ENCODE measurements at regions of chr11 and their contacts with region 1.

Region 1: GRCh38 chr11:110251837-110252236 is 44.6 kb downstream of the RDX start:
- DNase-seq: peak; percentile 97
- H3K4me3 Mint-ChIP-seq: peak overlapping the region; percentile 38
- H3K27ac Mint-ChIP-seq: peak overlapping the region; percentile 74
- H3K4me1 Mint-ChIP-seq: peaks cover 15% of the 10 kb centered on the region
- H3K27me3 Mint-ChIP-seq: no peaks in the 10 kb centered on the region
- CTCF ChIP-seq: no peak

Region 2: DNA sequence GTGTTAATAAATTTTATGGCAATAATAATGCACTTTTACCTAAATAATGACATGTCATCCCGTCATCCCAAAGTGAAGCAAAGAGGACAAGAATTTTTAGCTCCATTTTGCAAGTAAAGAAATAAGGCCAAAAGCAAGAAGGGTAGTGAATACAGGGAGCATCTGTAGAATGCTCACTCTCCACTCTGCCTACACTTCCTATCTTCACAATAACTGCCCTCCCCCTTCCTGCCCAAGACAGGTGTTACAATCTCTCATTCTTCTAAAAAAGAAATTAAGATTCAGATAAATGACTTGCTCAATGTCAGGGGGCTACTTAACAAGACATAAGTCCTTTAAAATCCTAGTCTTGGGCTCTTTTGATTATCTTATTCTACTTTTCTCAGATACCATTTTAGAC is 35.7 kb after region 1 on chr11:
- CTCF ChIA-PET with region 1: interaction called, 11 read pairs
- POLR2A ChIA-PET with region 1: interaction called, 4 read pairs
- intact Hi-C with region 1: no loop called
- DNase-seq: no peak
- H3K4me3 Mint-ChIP-seq: no peak overlapping the region
- H3K27ac Mint-ChIP-seq: no peak overlapping the region
- H3K4me1 Mint-ChIP-seq: peaks cover 26% of the 10 kb centered on the region
- H3K27me3 Mint-ChIP-seq: no peaks in the 10 kb centered on the region
- CTCF ChIP-seq: no peak

Region 3: GRCh38 chr11:110296226-110297075 is 44.6 kb after region 1 on chr11 and contains the start of gene RDX:
- CTCF ChIA-PET with region 1: interaction called, 3 read pairs
- POLR2A ChIA-PET with region 1: interaction called, 11 read pairs
- intact Hi-C with region 1: loop called (anchors 5 kb)
- DNase-seq: peak; percentile 89
- H3K4me3 Mint-ChIP-seq: peak within 1 kb of the TSS; percentile 81
- H3K27ac Mint-ChIP-seq: peak within 1 kb of the TSS; percentile 69
- H3K4me1 Mint-ChIP-seq: peaks cover 18% of the 10 kb centered on the region
- H3K27me3 Mint-ChIP-seq: no peaks in the 10 kb centered on the region
- CTCF ChIP-seq: no peak
- total RNA-seq, gene RDX: 132 and 145 TPM in 2 replicates

Region 4: DNA sequence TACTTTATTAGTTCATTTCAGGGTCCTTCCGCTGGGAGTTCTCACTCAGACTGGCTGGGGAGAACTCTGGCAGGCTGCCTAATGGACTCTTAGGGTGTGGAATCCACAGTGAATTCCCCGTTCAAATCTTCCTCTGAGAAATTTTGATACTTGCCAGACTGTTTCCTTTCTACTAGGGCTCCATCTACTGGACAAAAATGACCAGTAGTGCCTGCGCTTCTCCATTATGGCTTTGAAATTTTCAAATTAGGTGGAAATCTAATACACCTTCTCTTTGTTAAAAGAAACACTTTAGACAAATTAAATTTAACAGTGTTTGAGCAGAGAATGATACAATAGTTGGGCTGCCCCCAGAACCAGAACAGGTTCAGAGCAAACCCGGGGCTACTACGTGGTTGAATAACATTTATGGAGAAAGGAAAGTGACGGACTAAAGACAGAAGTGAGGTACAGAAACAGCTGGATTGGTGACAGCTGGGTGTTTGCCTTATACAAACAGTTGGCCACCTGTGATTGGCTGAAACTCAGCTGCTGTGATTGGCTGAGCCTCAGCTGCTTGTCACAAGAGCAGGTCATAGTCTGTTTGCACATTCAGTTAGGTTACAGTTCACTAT is 125.0 kb after region 1 on chr11:
- CTCF ChIA-PET with region 1: interaction called, 4 read pairs
- POLR2A ChIA-PET with region 1: interaction called, 4 read pairs
- intact Hi-C with region 1: loop called (anchors 5 kb)
- DNase-seq: peak; percentile 84
- H3K4me3 Mint-ChIP-seq: no peak overlapping the region
- H3K27ac Mint-ChIP-seq: peak overlapping the region; percentile 61
- H3K4me1 Mint-ChIP-seq: peaks cover 16% of the 10 kb centered on the region
- H3K27me3 Mint-ChIP-seq: no peaks in the 10 kb centered on the region
- CTCF ChIP-seq: peak; percentile 52